Activated T-helper 1 cell treated with anti-CD3 and anti-CD28 coated beads, Interleukin-12 subunit alpha, Interleukin-12 subunit beta, Interleukin-2, Interleukin-4 antibody, amounts not matched to agents 30 ng/mL and 10 ng/mL and 1 ng/mL, durations not matched to agents 14 hours and 24 hours and 36 hours (primary cell): ENCODE measurements at regions of chr1 and their contacts with region 1.

Region 1: GRCh38 chr1:149927503-149928387 is at the start of gene SF3B4:
- DNase-seq: peak; percentile 95
- H3K4me3 Mint-ChIP-seq: peak within 1 kb of the TSS; percentile 100
- H3K27ac Mint-ChIP-seq: peak within 1 kb of the TSS; percentile 96
- H3K4me1 Mint-ChIP-seq: peaks cover 81% of the 10 kb centered on the region
- H3K27me3 Mint-ChIP-seq: no peaks in the 10 kb centered on the region
- total RNA-seq, gene SF3B4: 125 and 136 TPM in 2 replicates

Region 2: DNA sequence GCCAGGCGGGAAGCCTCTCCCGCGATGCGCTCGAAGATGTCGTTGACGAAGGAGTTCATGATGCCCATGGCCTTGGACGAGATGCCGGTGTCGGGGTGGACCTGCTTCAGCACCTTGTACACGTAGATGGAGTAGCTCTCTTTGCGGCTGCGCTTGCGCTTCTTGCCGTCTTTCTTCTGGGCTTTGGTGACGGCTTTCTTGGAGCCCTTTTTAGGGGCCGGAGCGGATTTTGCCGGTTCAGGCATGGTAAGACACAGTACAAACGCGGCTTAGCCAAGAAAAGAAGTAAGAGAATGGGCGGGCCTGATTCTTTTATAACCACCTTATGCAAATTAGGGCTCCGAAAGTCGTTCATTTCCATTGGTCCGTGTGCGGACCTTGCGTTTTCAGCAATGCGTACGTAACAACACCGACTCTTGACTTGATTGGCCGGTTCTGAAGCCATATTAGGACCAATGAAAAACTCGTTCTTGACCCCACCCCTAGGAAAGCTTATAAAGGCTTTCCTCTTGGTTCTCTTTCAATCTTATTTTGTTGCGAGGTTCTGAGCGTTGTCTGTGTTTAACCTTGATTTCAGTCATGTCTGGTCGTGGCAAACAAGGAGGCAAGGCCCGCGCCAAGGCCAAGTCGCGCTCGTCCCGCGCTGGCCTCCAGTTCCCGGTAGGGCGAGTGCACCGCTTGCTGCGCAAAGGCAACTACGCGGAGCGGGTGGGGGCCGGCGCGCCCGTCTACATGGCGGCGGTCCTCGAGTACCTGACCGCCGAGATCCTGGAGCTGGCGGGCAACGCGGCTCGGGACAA is 41.1 kb before region 1 on chr1:
- intact Hi-C with region 1: loop called (anchors 1 kb)
- DNase-seq: peak; percentile 90
- H3K4me3 Mint-ChIP-seq: no peak overlapping the region
- H3K27ac Mint-ChIP-seq: no peak overlapping the region
- H3K4me1 Mint-ChIP-seq: peaks cover 13% of the 10 kb centered on the region
- H3K27me3 Mint-ChIP-seq: no peaks in the 10 kb centered on the region

Region 3: GRCh38 chr1:149917571-149918144 is 10.1 kb before region 1 on chr1 and contains the start of gene SV2A:
- intact Hi-C with region 1: loop called (anchors 1 kb)
- DNase-seq: no peak
- H3K4me3 Mint-ChIP-seq: peak within 1 kb of the TSS; percentile 96
- H3K27ac Mint-ChIP-seq: peak within 1 kb of the TSS; percentile 87
- H3K4me1 Mint-ChIP-seq: peaks cover 42% of the 10 kb centered on the region
- H3K27me3 Mint-ChIP-seq: no peaks in the 10 kb centered on the region
- total RNA-seq, gene SV2A: 17.3 and 18.6 TPM in 2 replicates

Region 4: DNA sequence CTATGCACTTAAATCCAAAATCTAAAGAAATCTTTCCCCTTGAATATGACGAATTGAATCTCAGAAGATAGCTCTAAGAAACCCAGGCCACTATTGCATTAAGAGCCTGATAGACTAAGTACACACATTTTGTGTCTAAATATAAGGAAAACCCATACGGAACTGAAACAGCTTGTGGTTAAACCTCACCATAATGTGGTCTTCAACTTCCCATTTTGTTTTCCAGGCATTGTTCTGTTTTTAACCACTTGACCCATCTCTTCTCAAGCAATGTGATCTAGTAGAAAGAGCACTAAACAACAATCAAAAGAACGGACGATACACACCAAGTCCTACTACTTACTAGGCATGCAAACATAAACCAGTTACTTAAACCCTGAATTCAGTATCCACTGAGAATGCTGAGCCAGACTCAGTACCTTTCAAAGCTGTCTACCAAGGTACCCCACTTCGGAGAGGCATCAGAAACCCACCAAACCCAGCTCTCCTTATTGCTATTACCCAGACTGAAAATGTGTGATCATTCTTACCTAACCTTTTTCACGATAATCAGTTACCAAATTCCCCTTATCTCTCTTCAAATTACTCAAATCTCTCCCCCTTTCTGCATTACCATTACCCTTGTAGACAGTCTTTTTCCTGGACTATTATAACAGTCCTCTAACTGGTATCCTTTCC is 70.0 kb after region 1 on chr1:
- intact Hi-C with region 1: loop called (anchors 1 kb)
- DNase-seq: no peak
- H3K4me3 Mint-ChIP-seq: peak overlapping the region; percentile 6
- H3K27ac Mint-ChIP-seq: peak overlapping the region; percentile 65
- H3K4me1 Mint-ChIP-seq: peaks cover 52% of the 10 kb centered on the region
- H3K27me3 Mint-ChIP-seq: peaks cover 2% of the 10 kb centered on the region

Region 5: GRCh38 chr1:150067184-150068036 is 139.7 kb after region 1 on chr1 and contains the start of gene VPS45:
- intact Hi-C with region 1: loop called (anchors 1 kb)
- DNase-seq: peak; percentile 83
- H3K4me3 Mint-ChIP-seq: peak within 1 kb of the TSS; percentile 97
- H3K27ac Mint-ChIP-seq: peak within 1 kb of the TSS; percentile 98
- H3K4me1 Mint-ChIP-seq: peaks cover 45% of the 10 kb centered on the region
- H3K27me3 Mint-ChIP-seq: peaks cover 5% of the 10 kb centered on the region
- total RNA-seq, gene VPS45: 25.9 and 30.2 TPM in 2 replicates

Region 6: GRCh38 chr1:150268705-150269403 is 341.1 kb after region 1 on chr1 and contains the start of gene APH1A:
- intact Hi-C with region 1: loop called (anchors 2 kb)
- DNase-seq: peak; percentile 94
- H3K4me3 Mint-ChIP-seq: peak within 1 kb of the TSS; percentile 93
- H3K27ac Mint-ChIP-seq: peak within 1 kb of the TSS; percentile 85
- H3K4me1 Mint-ChIP-seq: peaks cover 30% of the 10 kb centered on the region
- H3K27me3 Mint-ChIP-seq: peaks cover 3% of the 10 kb centered on the region
- total RNA-seq, gene APH1A: 102 and 111 TPM in 2 replicates